ENCODE measurements at regions of chr14 and their contacts with region 1.

Region 1: DNA sequence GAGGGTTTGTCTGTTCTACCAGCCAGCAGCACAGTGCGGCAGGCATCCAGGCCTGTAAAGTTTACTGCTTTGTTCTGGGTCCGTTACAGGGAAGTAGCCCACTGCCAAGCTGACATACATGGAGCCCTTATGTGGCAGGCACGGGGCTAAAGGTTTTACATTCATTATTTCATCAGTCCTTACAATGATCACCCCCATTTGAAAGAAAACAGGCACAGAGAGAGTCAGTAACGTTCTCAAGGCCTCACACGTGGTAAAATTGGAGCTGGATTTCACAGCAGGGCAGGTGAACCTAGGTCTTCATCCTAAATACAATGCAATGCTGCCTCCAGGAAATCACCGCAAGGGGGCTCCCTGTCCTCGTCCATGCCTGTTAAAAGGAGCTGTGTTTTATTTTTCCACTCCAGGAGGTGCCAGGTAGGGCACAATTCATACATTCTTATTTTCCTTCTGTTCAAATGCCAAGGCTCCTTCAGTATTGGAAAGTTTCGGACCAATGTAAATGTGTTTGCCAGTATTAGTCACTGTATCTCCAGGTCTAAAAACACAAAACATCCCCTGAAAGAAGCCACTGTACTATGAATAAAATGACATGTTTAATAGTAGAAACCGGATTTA is 172.2 kb upstream of the GZMB start:
- H3K4me3 Mint-ChIP-seq: no peak overlapping the region
- H3K27ac Mint-ChIP-seq: no peak overlapping the region
- H3K4me1 Mint-ChIP-seq: peaks cover 4% of the 10 kb centered on the region
- H3K27me3 Mint-ChIP-seq: peaks cover 6% of the 10 kb centered on the region

Region 2: GRCh38 chr14:24673534-24674203 is 132.5 kb before region 1 on chr14:
- intact Hi-C with region 1: no loop called
- H3K4me3 Mint-ChIP-seq: peak overlapping the region; percentile 23
- H3K27ac Mint-ChIP-seq: peak overlapping the region; percentile 55
- H3K4me1 Mint-ChIP-seq: peaks cover 24% of the 10 kb centered on the region
- H3K27me3 Mint-ChIP-seq: peaks cover 5% of the 10 kb centered on the region

Region 3: DNA sequence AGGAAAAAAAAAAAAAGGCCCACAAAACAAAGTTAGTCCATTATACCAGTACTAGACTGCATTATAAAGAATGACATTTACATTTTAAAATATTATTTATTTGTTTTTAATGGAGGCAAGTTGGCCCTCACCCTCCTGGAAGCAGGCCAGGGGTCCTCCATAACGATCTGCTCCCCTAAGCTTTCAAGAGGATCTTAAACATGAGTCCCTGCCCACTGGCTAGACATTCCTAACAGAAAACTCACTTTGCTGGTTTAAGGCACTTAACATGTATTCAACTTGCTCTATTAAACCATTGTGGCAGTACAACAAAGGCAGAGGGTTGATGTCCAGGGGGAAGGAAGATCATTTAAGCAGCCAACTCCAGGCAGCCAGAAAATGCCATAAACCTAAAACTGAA is 132.4 kb after region 1 on chr14:
- intact Hi-C with region 1: no loop called
- H3K4me3 Mint-ChIP-seq: no peak overlapping the region
- H3K27ac Mint-ChIP-seq: no peak overlapping the region
- H3K4me1 Mint-ChIP-seq: no peaks in the 10 kb centered on the region
- H3K27me3 Mint-ChIP-seq: peaks cover 5% of the 10 kb centered on the region

Region 4: DNA sequence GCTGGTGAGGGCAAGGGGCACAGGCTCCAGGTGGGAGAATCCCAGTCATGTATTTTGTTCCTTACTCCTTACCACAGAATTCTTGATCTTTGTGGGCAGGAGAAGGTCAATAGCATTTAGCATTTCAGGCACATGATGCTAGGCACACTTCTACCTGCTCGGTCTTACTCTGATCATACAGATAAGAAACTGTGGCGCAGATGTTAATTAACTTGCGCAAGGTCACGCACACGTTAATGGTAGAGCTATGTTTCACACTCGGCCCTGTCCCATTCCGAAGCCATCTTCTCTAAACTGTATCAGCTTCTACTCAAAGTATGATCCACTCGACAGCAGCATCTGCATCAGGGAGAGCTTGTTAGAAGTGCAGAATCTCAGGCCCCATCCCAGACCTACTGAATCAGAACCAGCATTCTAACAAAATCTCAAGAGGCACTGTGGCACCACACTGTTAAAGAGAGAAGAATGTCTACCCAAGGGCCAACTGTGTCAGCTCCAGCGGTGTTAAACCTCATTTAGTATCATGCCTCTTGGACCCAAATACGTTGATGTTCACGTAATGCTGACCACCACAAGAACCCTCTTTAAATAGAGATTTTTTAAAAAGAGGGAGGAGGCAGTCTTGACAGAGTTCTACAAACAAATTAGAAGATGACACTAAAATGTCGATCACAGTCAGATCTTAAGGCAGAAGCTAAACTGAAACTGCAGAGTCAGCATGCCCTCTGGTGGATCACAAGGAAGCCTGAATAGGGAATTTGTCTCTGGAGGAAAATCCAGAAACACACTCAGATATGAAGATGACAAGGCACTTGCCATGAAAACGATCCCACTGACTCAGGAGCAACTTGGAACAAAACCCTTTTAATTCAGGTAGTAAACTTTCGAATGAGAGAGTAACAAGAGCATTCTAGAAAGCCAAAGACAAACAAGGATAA is 236.5 kb after region 1 on chr14:
- intact Hi-C with region 1: loop called (anchors 5 kb)
- H3K4me3 Mint-ChIP-seq: no peak overlapping the region
- H3K27ac Mint-ChIP-seq: no peak overlapping the region
- H3K4me1 Mint-ChIP-seq: peaks cover 18% of the 10 kb centered on the region
- H3K27me3 Mint-ChIP-seq: peaks cover 29% of the 10 kb centered on the region

Region 5: GRCh38 chr14:25132732-25133422 is 326.7 kb after region 1 on chr14:
- intact Hi-C with region 1: loop called (anchors 1 kb)
- H3K4me3 Mint-ChIP-seq: no peak overlapping the region
- H3K27ac Mint-ChIP-seq: no peak overlapping the region
- H3K4me1 Mint-ChIP-seq: peaks cover 8% of the 10 kb centered on the region
- H3K27me3 Mint-ChIP-seq: peaks cover 46% of the 10 kb centered on the region

Region 6: GRCh38 chr14:25150934-25151790 is 345.0 kb after region 1 on chr14:
- intact Hi-C with region 1: loop called (anchors 1 kb)
- H3K4me3 Mint-ChIP-seq: no peak overlapping the region
- H3K27ac Mint-ChIP-seq: no peak overlapping the region
- H3K4me1 Mint-ChIP-seq: peaks cover 5% of the 10 kb centered on the region
- H3K27me3 Mint-ChIP-seq: peaks cover 10% of the 10 kb centered on the region